ENCODE measurements at regions of chr19 and their contacts with region 1.

Region 1: DNA sequence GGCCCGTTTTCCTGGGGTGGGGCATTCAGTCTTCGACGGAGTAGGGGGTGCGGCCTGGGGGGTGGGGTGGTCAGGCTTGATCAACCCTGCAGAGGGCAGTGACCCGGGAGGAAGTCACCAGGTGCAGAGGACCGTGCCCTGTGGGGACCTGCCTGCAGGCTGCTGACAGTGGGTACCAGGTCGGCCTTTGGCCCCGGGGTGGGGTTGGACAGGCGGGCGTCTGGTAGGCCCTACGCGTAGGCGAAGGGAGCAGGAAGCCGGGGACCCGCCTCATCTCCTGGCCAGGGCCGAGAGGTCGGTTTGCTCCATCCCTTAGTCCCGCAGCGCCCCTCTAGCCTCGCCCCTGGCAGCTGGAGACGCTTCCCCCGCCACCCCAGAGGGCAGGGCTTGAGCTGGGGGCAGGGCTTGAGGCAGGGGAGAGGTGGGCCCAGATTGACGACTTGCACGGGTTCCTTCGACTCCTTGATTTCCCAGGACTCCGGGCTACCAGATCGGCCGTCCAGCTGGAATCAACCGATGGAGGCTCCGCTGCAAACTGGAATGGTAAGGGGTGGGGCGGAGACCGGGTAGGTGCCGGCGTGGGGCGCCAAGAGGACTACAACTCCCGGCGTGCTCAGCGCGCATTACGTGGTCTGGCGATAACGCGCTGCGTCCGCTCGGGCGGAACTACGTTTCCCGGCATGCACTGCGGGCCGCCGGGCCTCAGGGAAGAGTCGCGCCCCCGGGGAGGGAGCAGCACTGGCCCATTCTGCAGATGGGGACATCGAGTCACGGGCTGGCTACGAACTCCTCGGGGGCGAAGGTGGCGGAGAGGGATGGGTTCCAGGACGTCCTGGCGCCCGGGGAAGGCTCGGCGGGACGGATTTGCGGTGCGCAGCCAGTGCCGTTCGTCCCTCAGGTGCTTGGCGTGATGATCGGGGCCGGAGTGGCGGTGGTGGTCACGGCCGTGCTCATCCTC is at the start of gene PNPLA6:
- DNase-seq: peak; percentile 85 to 95 (median 90)
- ATAC-seq: peak; percentile 77
- H3K4me3 ChIP-seq: peak within 1 kb of the TSS; percentile 93
- H3K4me3 Mint-ChIP-seq: peak within 1 kb of the TSS; percentile 98
- H3K27ac ChIP-seq: peak within 1 kb of the TSS; percentile 67 to 79
- H3K27ac Mint-ChIP-seq: peak within 1 kb of the TSS; percentile 87
- H3K4me1 ChIP-seq: peaks cover 40% of the 10 kb centered on the region
- H3K4me1 Mint-ChIP-seq: peaks cover 29% of the 10 kb centered on the region
- H3K27me3 ChIP-seq: no peaks in the 10 kb centered on the region
- H3K27me3 Mint-ChIP-seq: no peaks in the 10 kb centered on the region
- CTCF ChIP-seq: no peak
- total RNA-seq, gene PNPLA6: 62.0 to 70.9 TPM

Region 2: DNA sequence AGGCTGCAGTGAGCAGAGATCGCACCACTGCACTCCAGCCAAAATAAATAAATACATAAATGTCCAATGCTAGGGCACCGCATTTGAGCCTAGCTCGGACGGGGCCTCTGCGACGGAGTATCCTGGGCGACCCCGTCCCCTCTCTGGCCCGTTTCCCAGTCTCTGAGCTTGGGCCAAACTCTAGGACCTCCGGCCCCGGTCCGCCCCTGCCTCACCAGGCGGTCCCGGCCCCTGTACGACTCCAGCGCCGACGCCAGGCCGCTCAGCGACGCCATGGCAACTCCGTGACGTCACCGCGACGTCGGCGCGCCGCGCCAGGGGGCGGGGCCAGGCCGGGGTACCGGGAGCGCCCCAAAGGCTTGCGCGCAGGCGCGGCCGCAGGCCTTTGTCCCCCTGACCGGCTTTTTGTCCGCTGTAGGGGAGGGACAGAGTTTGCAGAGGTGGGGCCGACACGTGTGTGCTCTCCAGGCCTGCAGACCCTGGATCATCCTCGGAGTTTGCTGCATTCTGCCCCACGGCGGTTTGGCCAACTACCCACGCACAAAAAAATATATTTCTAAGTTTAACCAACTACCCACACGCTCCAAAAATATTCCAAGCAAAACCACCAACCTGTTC is 46.5 kb before region 1 on chr19 and contains the start of gene PEX11G:
- CTCF ChIA-PET with region 1: no interaction called
- POLR2A ChIA-PET with region 1: no interaction called
- intact Hi-C with region 1: loop called in 1 of 2 experiments (anchors 2 kb)
- DNase-seq: peak; percentile 81 to 96 (median 89)
- ATAC-seq: peak; percentile 97
- H3K4me3 ChIP-seq: peak within 1 kb of the TSS; percentile 80
- H3K4me3 Mint-ChIP-seq: peak within 1 kb of the TSS; percentile 94
- H3K27ac ChIP-seq: peak within 1 kb of the TSS; percentile 41 to 60
- H3K27ac Mint-ChIP-seq: peak within 1 kb of the TSS; percentile 81
- H3K4me1 ChIP-seq: peaks cover 15% of the 10 kb centered on the region
- H3K4me1 Mint-ChIP-seq: peaks cover 7% of the 10 kb centered on the region
- H3K27me3 ChIP-seq: no peaks in the 10 kb centered on the region
- H3K27me3 Mint-ChIP-seq: no peaks in the 10 kb centered on the region
- CTCF ChIP-seq: no peak
- total RNA-seq, gene PEX11G: not detected

Region 3: DNA sequence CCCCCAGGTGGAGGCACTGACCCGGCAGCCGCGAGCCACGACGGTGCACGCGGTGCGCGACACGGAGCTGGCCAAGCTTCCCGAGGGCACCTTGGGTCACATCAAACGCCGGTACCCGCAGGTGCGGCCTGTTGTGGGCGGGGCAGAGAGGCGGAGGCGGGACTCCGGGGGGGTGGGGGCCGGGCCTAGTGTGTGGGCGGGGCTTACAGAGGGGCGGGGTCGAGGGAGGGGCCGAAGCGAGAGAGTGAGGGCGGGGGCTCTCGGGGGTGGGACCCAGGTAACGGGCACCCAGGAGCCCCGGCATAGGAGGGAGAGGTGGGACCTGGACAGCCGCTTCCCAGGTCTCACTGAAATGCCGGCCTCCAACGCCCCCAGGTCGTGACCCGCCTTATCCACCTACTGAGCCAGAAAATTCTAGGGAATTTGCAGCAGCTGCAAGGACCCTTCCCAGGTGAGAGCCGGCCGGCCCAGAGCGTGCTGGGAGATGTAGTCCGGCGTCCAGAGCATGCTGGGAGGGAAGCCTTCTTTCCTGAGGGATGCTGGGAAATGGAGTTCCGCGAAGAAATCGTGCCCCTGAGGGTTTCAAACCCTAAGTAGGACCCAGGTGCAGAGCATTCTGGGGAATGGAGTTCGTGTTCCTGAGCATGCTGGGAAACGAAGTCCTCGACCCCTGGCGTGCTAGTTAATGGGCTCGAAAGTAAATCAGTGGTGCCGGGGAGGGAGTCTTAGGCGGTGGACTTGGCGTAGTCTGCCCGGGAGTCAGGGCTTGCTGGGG is 15.9 kb after region 1 on chr19:
- CTCF ChIA-PET with region 1: no interaction called
- POLR2A ChIA-PET with region 1: interaction called, 3 read pairs
- intact Hi-C with region 1: loop called in 1 of 2 experiments (anchors 2 kb)
- DNase-seq: peak in 8 of 14 experiments; percentile 6 to 68 (median 47)
- ATAC-seq: peak; percentile 94
- H3K4me3 ChIP-seq: no peak overlapping the region
- H3K4me3 Mint-ChIP-seq: no peak overlapping the region
- H3K27ac ChIP-seq: no peak overlapping the region
- H3K27ac Mint-ChIP-seq: no peak overlapping the region
- H3K4me1 ChIP-seq: no peaks in the 10 kb centered on the region
- H3K4me1 Mint-ChIP-seq: peaks cover 5% of the 10 kb centered on the region
- H3K27me3 ChIP-seq: no peaks in the 10 kb centered on the region
- H3K27me3 Mint-ChIP-seq: no peaks in the 10 kb centered on the region
- CTCF ChIP-seq: no peak

Region 4: GRCh38 chr19:7629347-7630054 is 94.2 kb after region 1 on chr19 and contains the starts of genes PET100 and XAB2:
- CTCF ChIA-PET with region 1: no interaction called
- POLR2A ChIA-PET with region 1: interaction called, 4 read pairs
- intact Hi-C with region 1: loop called in 1 of 2 experiments (anchors 5 kb)
- DNase-seq: peak; percentile 88 to 99 (median 94)
- ATAC-seq: peak; percentile 97
- H3K4me3 ChIP-seq: peak within 1 kb of the TSS; percentile 72
- H3K4me3 Mint-ChIP-seq: peak within 1 kb of the TSS; percentile 95
- H3K27ac ChIP-seq: peak within 1 kb of the TSS; percentile 92 to 94
- H3K27ac Mint-ChIP-seq: peak within 1 kb of the TSS; percentile 96
- H3K4me1 ChIP-seq: peaks cover 44% of the 10 kb centered on the region
- H3K4me1 Mint-ChIP-seq: peaks cover 34% of the 10 kb centered on the region
- H3K27me3 ChIP-seq: no peaks in the 10 kb centered on the region
- H3K27me3 Mint-ChIP-seq: no peaks in the 10 kb centered on the region
- CTCF ChIP-seq: no peak
- total RNA-seq, gene PET100: 178 to 188 TPM
- total RNA-seq, gene XAB2: 118 to 121 TPM